Dorsolateral prefrontal cortex (tissue), 120 donors: ENCODE measurements at regions of chr11 and their contacts with region 1.

Region 1: DNA sequence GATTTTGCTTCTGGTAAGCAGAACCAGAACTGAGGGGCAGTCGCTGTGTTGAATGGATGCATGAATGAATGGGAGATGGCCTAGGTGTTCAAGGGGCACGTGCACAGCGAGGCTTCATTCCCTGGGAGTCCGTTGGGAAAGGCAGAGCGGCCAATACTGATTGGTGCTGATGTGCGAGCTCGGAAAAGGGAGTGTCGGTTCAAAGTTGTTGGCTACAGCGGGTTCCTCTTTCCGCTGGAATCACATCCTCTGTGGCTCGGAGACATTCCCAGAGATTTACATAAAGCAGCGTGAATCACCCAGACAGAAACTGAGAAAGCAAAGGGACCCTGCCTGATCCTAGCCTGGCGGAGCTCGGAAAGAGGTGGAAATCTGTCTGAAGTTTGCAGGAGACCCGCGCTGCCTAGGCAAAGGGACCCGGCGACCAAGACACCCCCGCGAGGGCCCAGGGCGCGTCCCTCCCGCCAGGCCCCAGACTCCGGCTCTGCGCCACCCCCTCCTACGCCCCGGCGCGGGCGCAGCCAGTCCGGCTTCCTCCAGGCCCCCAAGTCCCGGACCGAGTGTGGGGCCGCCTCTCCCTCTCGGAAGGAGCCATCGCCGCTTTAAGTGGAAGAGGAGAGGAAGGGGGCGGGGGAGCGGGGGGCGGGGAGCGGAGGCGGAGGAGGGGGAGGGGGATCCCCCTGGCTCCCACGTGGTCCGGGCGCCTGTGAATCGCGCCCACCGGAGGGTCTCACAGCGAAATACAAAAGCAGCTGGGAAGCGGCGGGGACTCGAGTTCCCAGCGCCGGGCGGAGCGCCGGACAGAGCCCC is at the start of gene FJX1:
- DNase-seq: peak in 8 of 10 donors; percentile 30 to 60 (median 42)
- H3K4me3 ChIP-seq: peak within 1 kb of the TSS; percentile 53 to 83 (median 71)
- H3K27ac ChIP-seq: peak within 1 kb of the TSS in 58 of 59 donors; percentile 16 to 87 (median 77)
- H3K27me3 ChIP-seq: no peaks in the 10 kb centered on the region
- CTCF ChIP-seq: peak in 2 of 56 donors; percentile 3 to 8
- total RNA-seq, gene FJX1: 4.2 to 34.9 (median 12.1) TPM

Region 2: GRCh38 chr11:35165423-35166368 is 452.2 kb before region 1 on chr11:
- intact Hi-C with region 1: no loop called
- DNase-seq: no peak
- H3K4me3 ChIP-seq: no peak overlapping the region
- H3K27ac ChIP-seq: peak overlapping the region in 20 of 59 donors; percentile 2 to 69 (median 40)
- H3K27me3 ChIP-seq: no peaks in the 10 kb centered on the region
- CTCF ChIP-seq: no peak

Region 3: DNA sequence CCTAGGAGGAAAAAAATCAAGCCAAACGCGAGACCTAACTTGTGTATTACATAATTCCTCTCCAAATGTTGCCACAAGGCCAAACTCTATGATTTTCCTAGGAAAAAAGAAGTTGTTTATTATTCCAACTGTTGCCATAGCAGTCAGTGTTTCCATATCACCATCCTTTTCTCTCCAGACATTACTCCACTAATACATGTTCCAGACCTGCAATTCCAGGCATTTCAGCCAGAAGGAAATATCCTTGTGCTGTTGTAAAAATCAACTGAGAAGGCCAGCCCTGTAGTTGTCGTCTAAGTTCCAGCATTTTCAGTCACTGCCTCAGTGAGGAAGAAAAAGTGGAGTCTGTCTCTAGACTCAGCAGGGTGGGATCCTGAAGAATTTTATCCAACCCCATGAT is 59.4 kb before region 1 on chr11:
- intact Hi-C with region 1: no loop called
- DNase-seq: no peak
- H3K4me3 ChIP-seq: no peak overlapping the region
- H3K27ac ChIP-seq: no peak overlapping the region
- H3K27me3 ChIP-seq: peaks cover 0 to 3% (median 0%) of the 10 kb centered on the region in 45 donors
- CTCF ChIP-seq: no peak

Region 4: GRCh38 chr11:35593143-35593542 is 24.7 kb before region 1 on chr11:
- intact Hi-C with region 1: no loop called
- DNase-seq: no peak
- H3K4me3 ChIP-seq: no peak overlapping the region
- H3K27ac ChIP-seq: no peak overlapping the region
- H3K27me3 ChIP-seq: no peaks in the 10 kb centered on the region
- CTCF ChIP-seq: no peak

Region 5: GRCh38 chr11:35605711-35606110 is 12.2 kb before region 1 on chr11:
- intact Hi-C with region 1: no loop called
- DNase-seq: peak in 7 of 10 donors; percentile 6 to 58 (median 41)
- H3K4me3 ChIP-seq: no peak overlapping the region
- H3K27ac ChIP-seq: peak overlapping the region in 15 of 59 donors; percentile 0 to 61 (median 22)
- H3K27me3 ChIP-seq: no peaks in the 10 kb centered on the region
- CTCF ChIP-seq: peak in 1 of 56 donors; percentile 22

Region 6: DNA sequence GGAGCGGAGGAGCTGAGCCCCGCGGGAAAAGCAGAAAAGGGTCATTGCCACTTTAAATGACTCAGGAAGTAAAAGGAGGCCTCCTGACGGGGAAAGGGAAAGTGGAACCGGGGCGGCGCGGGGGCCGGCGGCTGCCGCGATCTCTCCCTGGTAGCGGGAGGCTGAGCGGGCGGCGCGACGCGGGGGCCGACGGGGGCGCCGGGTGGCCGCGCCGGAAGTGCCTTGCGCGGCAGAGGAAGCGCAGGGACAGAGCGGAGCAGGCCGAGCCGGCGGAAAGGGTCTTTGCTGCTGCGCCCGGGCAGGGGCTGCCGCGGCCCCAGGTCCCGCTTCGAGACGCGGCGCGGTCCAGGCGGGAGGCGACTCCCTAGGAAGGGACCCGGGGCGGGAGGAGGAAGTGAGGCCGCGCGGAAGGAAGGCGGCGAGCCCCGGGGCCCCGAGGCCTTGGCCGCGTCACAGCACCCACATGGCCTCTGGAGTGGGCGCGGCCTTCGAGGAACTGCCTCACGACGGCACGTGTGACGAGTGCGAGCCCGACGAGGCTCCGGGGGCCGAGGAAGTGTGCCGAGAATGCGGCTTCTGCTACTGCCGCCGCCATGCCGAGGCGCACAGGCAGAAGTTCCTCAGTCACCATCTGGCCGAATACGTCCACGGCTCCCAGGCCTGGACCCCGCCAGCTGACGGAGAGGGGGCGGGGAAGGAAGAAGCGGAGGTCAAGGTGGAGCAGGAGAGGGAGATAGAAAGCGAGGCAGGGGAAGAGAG is 44.9 kb after region 1 on chr11 and contains the start of gene TRIM44:
- intact Hi-C with region 1: loop called (anchors 1 to 2 kb)
- DNase-seq: peak; percentile 70 to 90 (median 84)
- H3K4me3 ChIP-seq: peak within 1 kb of the TSS; percentile 64 to 96 (median 86)
- H3K27ac ChIP-seq: peak within 1 kb of the TSS; percentile 79 to 99 (median 93)
- H3K27me3 ChIP-seq: no peaks in the 10 kb centered on the region
- CTCF ChIP-seq: peak in 16 of 56 donors; percentile 1 to 41 (median 16)
- total RNA-seq, gene TRIM44: 74.7 to 169 (median 126) TPM

Region 7: GRCh38 chr11:35927730-35928129 is 309.8 kb after region 1 on chr11:
- intact Hi-C with region 1: loop called in 1 of 2 experiments (anchors 10 kb)
- DNase-seq: peak in 4 of 10 donors; percentile 23 to 57 (median 48)
- H3K4me3 ChIP-seq: peak overlapping the region in 53 of 59 donors; percentile 5 to 67 (median 43)
- H3K27ac ChIP-seq: peak overlapping the region in 19 of 59 donors; percentile 1 to 75 (median 21)
- H3K27me3 ChIP-seq: no peaks in the 10 kb centered on the region
- CTCF ChIP-seq: no peak

Region 8: GRCh38 chr11:36131721-36132397 is 514.0 kb after region 1 on chr11:
- intact Hi-C with region 1: loop called (anchors 2 to 5 kb)
- DNase-seq: peak in 9 of 10 donors; percentile 51 to 78 (median 65)
- H3K4me3 ChIP-seq: no peak overlapping the region
- H3K27ac ChIP-seq: peak overlapping the region in 9 of 59 donors; percentile 2 to 30 (median 19)
- H3K27me3 ChIP-seq: no peaks in the 10 kb centered on the region
- CTCF ChIP-seq: peak; percentile 44 to 89 (median 75)

Region 9: DNA sequence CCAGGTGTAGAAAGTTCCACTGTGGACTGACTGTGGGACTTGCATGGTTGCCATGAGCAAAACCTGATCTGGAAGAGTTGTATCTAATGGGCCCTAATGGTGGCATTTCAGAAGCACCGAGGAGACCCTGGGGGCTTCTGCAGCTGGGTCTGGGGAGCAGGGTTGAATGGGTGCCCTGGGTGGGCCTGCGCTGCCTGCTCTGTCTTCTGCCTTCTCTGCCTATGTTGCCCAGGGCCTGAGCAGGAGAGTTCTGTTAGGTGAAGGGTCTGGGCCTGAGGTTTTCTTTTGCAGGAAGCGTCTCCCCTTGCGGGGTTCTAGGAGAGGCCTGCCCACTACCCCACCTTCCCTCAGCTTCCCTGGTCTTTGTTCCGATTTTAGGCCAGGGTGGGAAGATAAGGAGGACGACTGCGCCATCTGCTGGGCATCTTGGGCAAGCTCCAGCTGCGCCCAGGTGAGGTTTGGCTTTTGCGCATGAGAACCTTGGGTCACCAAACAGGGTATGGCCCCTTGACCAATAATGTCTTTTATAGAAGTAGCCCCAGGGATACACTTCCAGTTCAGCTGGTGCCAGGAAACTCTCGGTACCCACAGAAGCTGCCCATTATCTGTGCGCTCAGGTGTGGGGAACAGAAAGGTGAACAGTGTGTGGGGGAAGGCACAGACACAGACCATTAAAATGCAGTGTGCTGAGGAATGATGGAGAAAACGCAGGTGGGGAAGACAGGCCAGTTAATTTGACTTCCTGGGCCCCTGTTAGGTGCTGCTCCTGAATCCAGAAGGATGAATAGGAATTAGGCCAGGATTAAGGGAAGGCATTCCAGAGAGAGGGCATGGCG is 648.1 kb after region 1 on chr11:
- intact Hi-C with region 1: loop called (anchors 2 to 5 kb)
- DNase-seq: peak in 6 of 10 donors; percentile 27 to 65 (median 46)
- H3K4me3 ChIP-seq: no peak overlapping the region
- H3K27ac ChIP-seq: no peak overlapping the region
- H3K27me3 ChIP-seq: no peaks in the 10 kb centered on the region
- CTCF ChIP-seq: peak; percentile 60 to 91 (median 81)

Region 10: GRCh38 chr11:36492724-36493304 is 874.9 kb after region 1 on chr11:
- intact Hi-C with region 1: loop called in 1 of 2 experiments (anchors 10 kb)
- DNase-seq: peak in 1 of 10 donors; percentile 28
- H3K4me3 ChIP-seq: no peak overlapping the region
- H3K27ac ChIP-seq: peak overlapping the region in 16 of 59 donors; percentile 3 to 60 (median 28)
- H3K27me3 ChIP-seq: no peaks in the 10 kb centered on the region
- CTCF ChIP-seq: peak; percentile 61 to 91 (median 80)